Endothelial cell of umbilical vein (primary cell): ENCODE measurements at regions of chr7 and their contacts with region 1.

Region 1: DNA sequence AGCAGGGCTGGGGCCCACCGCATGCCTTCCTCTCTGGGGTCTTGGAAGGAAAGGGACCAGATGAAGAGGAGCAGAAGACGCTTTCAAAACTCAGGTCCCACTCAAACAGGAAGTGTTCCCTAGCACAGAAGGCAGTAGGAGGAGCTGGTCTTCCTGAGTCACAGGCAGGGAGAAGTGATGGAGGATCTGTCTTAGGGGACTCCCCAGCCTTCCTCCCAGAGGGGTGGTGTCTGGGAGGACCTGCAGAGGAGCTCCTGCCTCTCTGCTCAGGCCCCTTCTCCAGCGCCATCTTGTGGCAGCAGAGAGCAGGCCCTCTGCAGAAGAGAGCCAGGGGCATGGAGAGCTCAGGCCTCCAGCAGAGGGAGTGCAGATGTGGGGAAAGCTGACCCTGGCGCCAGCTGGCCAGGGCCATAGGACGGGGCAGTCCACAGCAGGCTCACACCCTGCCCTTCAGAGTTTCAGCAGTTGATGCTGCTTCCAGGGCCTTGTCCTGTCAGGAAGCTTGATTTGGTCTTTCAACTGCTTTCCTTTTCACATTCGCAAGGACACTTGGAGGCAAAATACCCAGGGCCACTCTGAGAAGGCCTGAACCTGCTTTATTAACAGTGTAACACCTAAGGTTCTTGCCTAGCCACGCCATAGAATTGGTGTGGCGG is 62.2 kb upstream of the TARP start:
- DNase-seq: peak; percentile 82
- H3K4me3 ChIP-seq: no peak overlapping the region
- H3K27ac ChIP-seq: no peak overlapping the region
- H3K4me1 ChIP-seq: no peaks in the 10 kb centered on the region
- H3K27me3 ChIP-seq: no peaks in the 10 kb centered on the region
- CTCF ChIP-seq: peak; percentile 98 to 100
- POLR2A ChIP-seq: no peak

Region 2: DNA sequence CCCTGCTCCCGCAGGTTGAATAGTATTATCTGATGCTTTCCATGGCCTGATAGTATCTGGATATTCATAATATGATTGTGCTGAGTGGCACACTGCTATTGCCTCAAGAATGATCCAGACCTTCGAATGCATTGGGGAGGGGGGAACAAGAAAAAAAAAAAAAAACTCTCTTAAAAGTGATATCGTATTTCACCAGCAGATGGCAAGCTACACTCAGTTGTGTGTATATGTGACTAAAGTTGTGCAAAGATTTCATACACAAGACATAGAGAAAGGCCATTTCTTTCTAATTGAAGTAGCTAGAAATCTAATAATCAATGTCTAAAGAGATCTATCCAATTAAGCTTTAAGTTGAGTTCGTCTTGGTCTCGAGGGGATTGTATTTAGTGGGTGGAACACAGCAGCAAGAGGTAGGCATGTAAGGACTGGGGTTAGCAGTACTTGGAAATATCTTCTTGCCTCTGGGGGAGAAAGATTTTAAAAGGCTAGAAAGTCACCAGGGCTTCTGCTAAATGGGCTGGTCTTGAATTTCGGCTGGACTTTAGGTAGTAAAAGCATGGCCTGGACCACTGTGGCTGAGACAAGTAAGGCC is 434.3 kb before region 1 on chr7:
- CTCF ChIA-PET with region 1: interaction called, 27 read pairs
- POLR2A ChIA-PET with region 1: no interaction called
- dilution Hi-C with region 1: no loop called
- intact Hi-C with region 1: no loop called
- DNase-seq: peak; percentile 52
- H3K4me3 ChIP-seq: no peak overlapping the region
- H3K27ac ChIP-seq: no peak overlapping the region
- H3K4me1 ChIP-seq: no peaks in the 10 kb centered on the region
- H3K27me3 ChIP-seq: no peaks in the 10 kb centered on the region
- CTCF ChIP-seq: peak; percentile 18 to 35
- POLR2A ChIP-seq: no peak

Region 3: DNA sequence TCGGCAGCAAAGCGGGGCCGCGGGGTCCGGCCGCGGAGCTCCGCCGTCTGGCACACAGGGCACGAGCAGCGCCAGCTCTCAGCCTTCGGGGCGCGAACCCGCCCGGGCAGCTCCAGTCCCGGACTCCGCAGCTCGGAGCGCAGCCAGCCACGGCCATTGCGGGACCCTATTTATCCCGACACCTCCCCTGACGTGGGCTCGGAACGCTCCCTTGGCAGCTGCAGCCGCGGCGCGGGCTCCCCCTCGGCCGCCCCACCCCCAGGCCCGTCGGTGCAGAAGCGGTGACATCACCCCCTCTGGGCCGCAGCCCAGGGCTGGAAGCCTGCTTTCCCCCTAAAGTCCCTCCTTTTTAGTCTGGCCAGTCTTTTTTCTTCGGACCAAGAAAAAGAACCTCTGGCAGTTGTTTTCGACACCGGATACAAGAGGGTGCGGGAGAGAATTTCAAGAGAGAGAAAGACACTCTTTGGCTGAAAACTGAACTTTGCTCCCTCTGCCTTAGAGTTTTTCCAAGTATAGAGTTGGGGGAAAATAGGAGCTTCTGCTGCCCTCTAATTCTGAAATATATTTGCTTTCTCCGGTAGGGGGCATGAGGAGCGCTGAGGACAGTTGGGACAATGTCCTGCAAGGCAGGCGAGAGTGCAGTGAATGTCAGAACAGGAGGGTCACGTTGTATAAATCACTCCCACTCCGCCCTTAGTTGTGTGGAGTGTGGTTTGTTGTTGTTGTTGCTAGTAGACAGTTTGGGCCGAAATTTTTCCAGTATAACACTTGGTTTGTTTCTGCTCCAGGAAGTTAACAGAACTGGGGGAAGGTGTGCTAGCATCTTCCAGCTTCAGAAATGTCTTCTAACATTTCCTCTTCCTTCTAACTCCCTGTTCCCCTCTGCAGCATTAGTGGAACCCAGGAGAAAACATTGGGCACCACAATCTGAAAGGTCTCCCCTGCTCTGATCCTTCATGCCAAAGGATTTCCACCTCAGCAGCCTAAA is 418.7 kb before region 1 on chr7 and contains the start of gene SFRP4:
- CTCF ChIA-PET with region 1: interaction called, 13 read pairs
- POLR2A ChIA-PET with region 1: no interaction called
- dilution Hi-C with region 1: no loop called
- intact Hi-C with region 1: no loop called
- DNase-seq: peak; percentile 56
- H3K4me3 ChIP-seq: peak within 1 kb of the TSS in 1 of 3 experiments; percentile 20
- H3K27ac ChIP-seq: no peak within 1 kb of the TSS
- H3K4me1 ChIP-seq: peaks cover 4% of the 10 kb centered on the region
- H3K27me3 ChIP-seq: peaks cover 31 to 42% of the 10 kb centered on the region in 2 experiments
- CTCF ChIP-seq: peak; percentile 54 to 66
- POLR2A ChIP-seq: no peak
- total RNA-seq, gene SFRP4: not detected in 2 replicates

Region 4: DNA sequence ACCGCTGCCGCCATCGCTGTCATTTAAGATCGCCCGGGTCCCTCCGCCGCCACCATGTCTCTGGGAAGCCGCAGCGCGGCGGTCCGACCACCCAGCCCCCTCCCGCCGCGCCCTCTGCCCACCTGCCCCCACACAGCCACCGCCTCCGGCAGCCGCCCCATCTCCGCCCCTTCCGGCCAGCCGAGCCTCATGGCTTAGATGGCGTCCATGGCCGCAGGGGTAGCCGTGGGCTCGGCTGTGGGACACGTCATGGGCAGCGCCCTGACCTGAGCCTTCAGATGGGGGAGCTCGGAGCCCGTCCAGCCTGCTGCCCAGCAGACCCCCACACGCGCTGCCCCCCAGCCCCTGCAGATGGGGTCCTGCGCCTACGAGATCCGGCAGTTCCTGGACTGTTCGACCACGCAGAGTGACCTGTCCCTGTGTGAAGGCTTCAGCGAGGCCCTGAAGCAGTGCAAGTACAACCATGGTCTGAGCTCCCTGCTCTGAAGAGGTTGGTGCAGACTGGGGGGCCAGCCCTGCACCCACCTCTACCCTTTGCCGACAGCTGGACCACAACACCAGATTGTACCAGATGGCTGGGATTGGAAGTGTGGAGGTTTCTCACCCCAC is 24.2 kb before region 1 on chr7:
- CTCF ChIA-PET with region 1: interaction called, 13 read pairs
- POLR2A ChIA-PET with region 1: no interaction called
- dilution Hi-C with region 1: no loop called
- intact Hi-C with region 1: no loop called
- DNase-seq: no peak
- H3K4me3 ChIP-seq: peak overlapping the region; percentile 40 to 58 (median 44)
- H3K27ac ChIP-seq: no peak overlapping the region
- H3K4me1 ChIP-seq: peaks cover 13% of the 10 kb centered on the region
- H3K27me3 ChIP-seq: no peaks in the 10 kb centered on the region
- CTCF ChIP-seq: no peak
- POLR2A ChIP-seq: no peak

Region 5: DNA sequence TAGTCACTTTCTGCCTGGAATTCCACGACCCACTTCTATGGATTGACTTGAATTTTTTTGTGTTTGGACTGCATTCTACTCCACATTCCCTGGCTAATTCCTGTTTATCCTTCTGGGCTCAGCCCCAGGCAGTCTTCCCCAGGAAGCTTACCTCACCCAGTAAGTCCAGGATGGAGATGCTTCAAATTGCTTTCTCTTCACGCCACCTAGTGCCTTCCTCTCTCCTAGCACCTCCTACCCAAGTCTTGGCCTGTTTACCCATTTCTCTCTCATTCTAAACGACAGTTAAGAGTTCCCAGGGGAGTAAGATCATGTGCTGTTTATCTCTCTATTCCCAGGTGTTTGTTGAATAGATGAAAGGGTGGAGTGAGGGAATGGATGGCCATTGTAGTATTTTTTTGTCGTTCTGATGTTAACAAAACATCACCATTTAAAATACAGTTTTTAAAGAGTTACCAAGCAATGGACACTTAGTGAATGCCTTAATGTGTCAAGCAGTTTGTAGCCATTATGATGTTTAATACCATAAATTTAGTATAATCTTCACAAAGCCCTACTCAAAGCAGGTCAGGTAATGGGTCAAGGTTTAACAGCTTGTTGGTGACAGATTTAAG is 16.7 kb before region 1 on chr7:
- CTCF ChIA-PET with region 1: interaction called, 31 read pairs
- POLR2A ChIA-PET with region 1: no interaction called
- dilution Hi-C with region 1: no loop called
- intact Hi-C with region 1: no loop called
- DNase-seq: peak; percentile 74
- H3K4me3 ChIP-seq: no peak overlapping the region
- H3K27ac ChIP-seq: no peak overlapping the region
- H3K4me1 ChIP-seq: no peaks in the 10 kb centered on the region
- H3K27me3 ChIP-seq: peaks cover 0 to 1% of the 10 kb centered on the region in 2 experiments
- CTCF ChIP-seq: peak; percentile 64 to 67
- POLR2A ChIP-seq: no peak

Region 6: GRCh38 chr7:38360776-38361175 is 25.2 kb after region 1 on chr7:
- CTCF ChIA-PET with region 1: interaction called, 80 read pairs
- POLR2A ChIA-PET with region 1: no interaction called
- dilution Hi-C with region 1: no loop called
- intact Hi-C with region 1: no loop called
- DNase-seq: no peak
- H3K4me3 ChIP-seq: no peak overlapping the region
- H3K27ac ChIP-seq: no peak overlapping the region
- H3K4me1 ChIP-seq: peaks cover 5% of the 10 kb centered on the region
- H3K27me3 ChIP-seq: no peaks in the 10 kb centered on the region
- CTCF ChIP-seq: no peak
- POLR2A ChIP-seq: no peak